Left lung (tissue), 14 donors: ENCODE measurements at regions of chr19 and their contacts with region 1.

Region 1: DNA sequence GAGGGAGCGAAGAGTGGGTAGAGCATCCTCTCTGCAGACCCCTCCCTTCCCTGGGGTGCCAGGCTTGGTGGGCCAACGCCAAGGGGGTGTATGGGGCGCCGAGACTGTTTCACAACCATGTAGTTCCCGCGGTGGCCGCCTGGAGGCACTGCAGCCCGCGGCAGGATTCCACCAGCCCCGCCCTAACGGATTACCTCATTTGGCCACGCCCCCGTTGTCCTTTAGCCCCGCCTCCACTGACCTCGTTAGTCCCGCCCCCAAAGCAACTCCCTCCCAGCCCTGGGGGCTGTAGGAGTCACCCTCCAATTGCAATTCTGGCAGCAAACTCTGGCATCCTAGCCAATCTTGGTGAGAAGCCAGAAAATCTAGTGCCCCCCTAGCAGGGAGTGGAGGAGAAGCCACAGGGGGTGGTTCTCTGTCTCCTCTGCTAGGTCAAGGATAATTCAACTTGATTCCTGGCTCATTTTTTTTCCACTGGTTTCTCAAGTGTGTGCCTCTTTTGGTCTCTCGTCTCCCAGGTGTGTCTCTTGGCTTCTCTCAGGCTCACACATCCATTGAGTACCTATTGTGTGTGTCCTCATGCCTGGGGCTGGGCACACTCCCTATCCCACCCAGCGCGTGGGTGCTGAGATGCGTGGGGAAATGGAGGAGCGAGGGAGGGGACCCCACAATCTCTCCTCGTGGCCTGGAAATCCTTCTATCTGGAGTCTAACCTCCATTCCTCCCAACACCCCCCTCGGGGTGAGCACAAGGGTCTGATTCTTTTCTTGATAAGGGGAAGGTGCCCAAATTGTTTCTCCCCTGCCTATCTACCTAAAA is 2.0 kb downstream of the OLFM2 start:
- DNase-seq: peak in 3 of 4 donors; percentile 47 to 86 (median 47)
- ATAC-seq: peak; percentile 83
- H3K4me3 ChIP-seq: no peak overlapping the region
- H3K27ac ChIP-seq: no peak overlapping the region
- H3K4me1 ChIP-seq: peaks cover 6 to 15% of the 10 kb centered on the region in 2 donors
- H3K27me3 ChIP-seq: peaks cover 30 to 84% of the 10 kb centered on the region in 2 donors
- CTCF ChIP-seq: peak; percentile 70 to 72

Region 2: DNA sequence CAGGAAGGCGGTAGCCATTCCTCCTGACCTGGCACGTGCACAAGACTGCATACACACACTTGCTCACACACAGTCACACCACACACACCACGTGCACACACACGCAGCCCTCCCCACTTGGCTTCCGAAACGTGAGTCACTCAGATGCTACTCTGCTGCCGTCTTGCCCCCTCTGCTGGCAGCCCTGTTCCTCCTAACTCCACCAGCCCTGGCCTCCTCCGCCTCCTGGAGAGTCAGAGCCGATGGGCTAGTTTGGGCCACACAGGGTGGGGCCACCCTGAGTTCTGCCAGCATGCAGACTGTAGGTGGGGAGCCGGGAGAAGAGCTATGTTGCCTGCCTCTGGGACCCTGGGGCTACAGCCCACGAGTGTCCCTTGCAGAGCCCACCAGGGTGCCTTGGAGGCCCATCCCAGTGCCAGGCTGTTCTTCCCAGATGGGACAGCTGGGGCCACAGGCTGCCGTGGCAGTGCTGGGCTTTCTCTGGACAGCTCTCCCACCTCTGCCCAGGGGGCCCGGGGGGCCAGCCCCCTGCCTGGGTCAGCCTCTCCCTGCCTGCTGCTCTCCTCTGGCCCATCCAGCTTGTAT is 87.2 kb before region 1 on chr19:
- intact Hi-C with region 1: no loop called
- DNase-seq: no peak
- ATAC-seq: peak; percentile 60
- H3K4me3 ChIP-seq: no peak overlapping the region
- H3K27ac ChIP-seq: no peak overlapping the region
- H3K4me1 ChIP-seq: no peaks in the 10 kb centered on the region
- H3K27me3 ChIP-seq: no peaks in the 10 kb centered on the region
- CTCF ChIP-seq: no peak

Region 3: GRCh38 chr19:10010247-10010691 is 75.9 kb after region 1 on chr19 and contains the start of gene COL5A3:
- intact Hi-C with region 1: no loop called
- DNase-seq: peak in 2 of 4 donors; percentile 55 to 78
- ATAC-seq: peak; percentile 39
- H3K4me3 ChIP-seq: peak within 1 kb of the TSS; percentile 21 to 33
- H3K27ac ChIP-seq: no peak within 1 kb of the TSS
- H3K4me1 ChIP-seq: no peaks in the 10 kb centered on the region
- H3K27me3 ChIP-seq: peaks cover 17 to 99% of the 10 kb centered on the region in 2 donors
- CTCF ChIP-seq: no peak
- polyA plus RNA-seq, gene COL5A3: 4.5 to 8.0 (median 5.4) TPM

Region 4: GRCh38 chr19:10033614-10034013 is 99.3 kb after region 1 on chr19:
- intact Hi-C with region 1: loop called in 1 of 2 experiments (anchors 5 kb)
- DNase-seq: no peak
- ATAC-seq: no peak
- H3K4me3 ChIP-seq: no peak overlapping the region
- H3K27ac ChIP-seq: no peak overlapping the region
- H3K4me1 ChIP-seq: no peaks in the 10 kb centered on the region
- H3K27me3 ChIP-seq: peaks cover 4 to 71% of the 10 kb centered on the region in 2 donors
- CTCF ChIP-seq: no peak